Heart left ventricle (tissue), 16 donors: ENCODE measurements at regions of chr1 and their contacts with region 1.

Region 1: DNA sequence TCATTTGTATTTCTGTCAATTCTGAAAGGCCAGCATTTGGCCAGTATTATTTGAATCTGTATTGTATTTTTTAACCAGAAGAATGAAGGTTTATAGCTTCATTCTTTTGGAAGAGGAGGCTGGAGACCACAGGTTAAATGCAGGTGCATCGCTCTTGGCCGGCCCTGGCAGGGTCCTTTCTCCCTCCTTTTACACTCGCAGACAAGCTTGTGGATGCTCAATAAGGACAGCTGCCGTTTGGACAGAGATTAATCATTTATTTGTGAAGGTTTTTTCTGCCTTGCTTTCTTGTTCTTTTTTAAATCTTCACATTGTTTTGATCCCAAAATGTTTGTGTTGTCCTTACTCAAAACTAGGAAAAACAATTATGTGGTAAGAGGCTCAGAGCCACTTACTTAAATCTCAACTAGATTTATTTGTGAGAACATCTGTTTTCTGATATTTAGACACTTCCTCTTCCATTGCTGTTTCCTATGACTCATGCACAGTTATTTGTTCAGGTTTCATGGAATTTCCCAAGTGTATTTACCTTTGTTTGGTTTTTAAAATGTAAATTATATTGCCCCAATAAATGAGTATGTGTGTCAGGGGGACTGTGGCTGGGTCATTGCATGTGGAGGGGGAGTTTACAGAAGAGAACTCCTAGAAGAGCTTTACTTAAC is 46.7 kb upstream of the LAMC2 start:
- DNase-seq: no peak
- ATAC-seq: peak in 2 of 4 donors; percentile 50 to 55
- H3K4me3 ChIP-seq: no peak overlapping the region
- H3K27ac ChIP-seq: peak overlapping the region; percentile 32 to 70 (median 38)
- H3K4me1 ChIP-seq: peaks cover 0 to 43% (median 19%) of the 10 kb centered on the region in 12 donors
- H3K27me3 ChIP-seq: no peaks in the 10 kb centered on the region
- CTCF ChIP-seq: no peak
- POLR2A ChIP-seq: no peak

Region 2: GRCh38 chr1:182869241-182869666 is 270.2 kb before region 1 on chr1:
- intact Hi-C with region 1: loop called in 1 of 10 experiments (anchors 10 kb)
- DNase-seq: no peak
- ATAC-seq: peak in 2 of 4 donors; percentile 7 to 39
- H3K4me3 ChIP-seq: no peak overlapping the region
- H3K27ac ChIP-seq: no peak overlapping the region
- H3K4me1 ChIP-seq: no peaks in the 10 kb centered on the region
- H3K27me3 ChIP-seq: no peaks in the 10 kb centered on the region
- CTCF ChIP-seq: no peak
- POLR2A ChIP-seq: no peak

Region 3: GRCh38 chr1:182952677-182953431 is 186.6 kb before region 1 on chr1 and contains the start of gene SHCBP1L:
- intact Hi-C with region 1: no loop called
- DNase-seq: peak in 2 of 5 donors; percentile 27 to 64
- ATAC-seq: peak in 3 of 4 donors; percentile 24 to 37 (median 36)
- H3K4me3 ChIP-seq: peak within 1 kb of the TSS in 11 of 12 donors; percentile 14 to 50 (median 34)
- H3K27ac ChIP-seq: no peak within 1 kb of the TSS
- H3K4me1 ChIP-seq: peaks cover 0 to 10% (median 2%) of the 10 kb centered on the region in 12 donors
- H3K27me3 ChIP-seq: peaks cover 3 to 19% (median 13%) of the 10 kb centered on the region in 9 donors
- CTCF ChIP-seq: no peak
- POLR2A ChIP-seq: no peak
- total RNA-seq, gene SHCBP1L: 0.31 TPM in 1 of 9 donors, not detected in the others

Region 4: GRCh38 chr1:183180634-183181056 is 41.2 kb after region 1 on chr1:
- intact Hi-C with region 1: loop called in 1 of 10 experiments (anchors 5 kb)
- DNase-seq: peak; percentile 61 to 82 (median 70)
- ATAC-seq: peak; percentile 80 to 93 (median 91)
- H3K4me3 ChIP-seq: peak overlapping the region in 2 of 12 donors; percentile 3 to 9
- H3K27ac ChIP-seq: peak overlapping the region; percentile 33 to 82 (median 73)
- H3K4me1 ChIP-seq: peaks cover 3 to 34% (median 20%) of the 10 kb centered on the region in 12 donors
- H3K27me3 ChIP-seq: peaks cover 0 to 2% (median 0%) of the 10 kb centered on the region in 9 donors
- CTCF ChIP-seq: no peak
- POLR2A ChIP-seq: no peak